Activated CD4-positive, alpha-beta memory T cell treated with anti-CD3 and anti-CD28 coated beads for 36 hours (primary cell): ENCODE measurements at regions of chr17 and their contacts with region 1.

Region 1: DNA sequence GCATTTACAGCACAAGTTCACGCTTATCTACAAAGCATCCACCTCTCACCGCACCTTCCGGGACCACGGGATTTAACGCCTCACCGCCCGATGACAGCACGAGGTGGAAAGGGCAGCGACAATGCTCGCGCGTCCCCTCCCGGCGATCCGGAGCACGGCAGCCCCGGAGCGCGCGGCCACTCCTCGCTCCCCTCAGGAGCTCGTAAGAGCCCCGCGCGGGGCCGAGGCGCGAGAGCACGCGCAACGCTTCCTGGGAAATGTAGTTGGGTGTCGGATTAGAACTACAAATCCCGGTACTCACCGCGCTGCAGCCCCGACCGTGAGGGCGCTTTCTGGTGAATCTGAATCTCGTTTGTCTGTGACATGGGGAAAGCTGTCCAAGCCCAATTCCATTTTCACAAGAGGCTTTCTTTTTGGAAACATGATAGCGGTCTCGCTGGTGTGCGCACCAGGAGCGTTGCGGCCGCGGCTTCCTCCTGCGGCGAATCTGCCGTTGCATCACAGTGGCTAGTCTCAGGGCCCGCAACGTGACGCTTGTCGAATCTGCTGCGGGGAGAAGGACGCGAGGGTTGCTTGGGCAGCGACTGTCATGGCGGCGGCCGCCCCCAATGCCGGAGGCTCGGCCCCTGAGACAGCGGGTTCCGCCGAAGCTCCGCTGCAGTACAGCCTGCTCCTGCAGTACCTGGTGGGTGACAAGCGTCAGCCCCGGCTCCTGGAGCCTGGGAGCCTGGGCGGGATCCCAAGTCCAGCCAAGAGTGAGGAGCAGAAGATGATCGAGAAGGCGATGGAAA is at the start of gene TIMM22:
- DNase-seq: peak; percentile 96
- H3K4me3 Mint-ChIP-seq: peak within 1 kb of the TSS; percentile 92
- H3K27ac Mint-ChIP-seq: peak within 1 kb of the TSS; percentile 97
- H3K4me1 Mint-ChIP-seq: peaks cover 22% of the 10 kb centered on the region
- H3K27me3 Mint-ChIP-seq: no peaks in the 10 kb centered on the region
- total RNA-seq, gene TIMM22: 8.0 to 9.6 TPM

Region 2: DNA sequence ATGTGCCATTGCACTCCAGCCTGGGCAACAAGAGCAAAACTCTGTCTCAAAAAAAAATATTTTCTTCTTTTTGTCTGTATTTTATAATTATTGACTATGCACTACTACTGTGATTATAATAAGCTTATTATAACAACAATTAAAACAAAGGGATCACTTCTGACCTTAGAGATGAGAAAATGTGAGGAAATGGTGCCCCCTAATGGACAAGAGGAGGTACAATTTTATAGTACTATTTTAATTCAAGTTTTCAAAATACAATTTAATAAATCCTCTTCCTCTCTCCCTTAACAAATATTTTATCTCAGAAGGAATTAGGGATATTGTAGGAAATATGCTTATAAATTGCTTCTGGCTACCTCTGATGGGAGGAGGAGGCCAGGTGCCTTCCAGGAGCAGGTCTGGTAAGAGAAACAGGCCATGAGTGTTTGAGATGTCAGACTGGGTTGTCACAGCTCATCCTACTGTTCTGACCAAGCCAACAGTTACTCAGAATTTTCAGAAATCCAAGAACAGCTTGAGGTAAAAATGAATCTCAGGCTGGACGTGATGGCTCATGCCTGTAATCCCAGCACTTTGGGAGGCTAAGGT is 296.1 kb before region 1 on chr17:
- CTCF ChIA-PET with region 1: interaction called, 8 read pairs
- POLR2A ChIA-PET with region 1: no interaction called
- intact Hi-C with region 1: loop called (anchors 5 kb)
- DNase-seq: no peak
- H3K4me3 Mint-ChIP-seq: no peak overlapping the region
- H3K27ac Mint-ChIP-seq: no peak overlapping the region
- H3K4me1 Mint-ChIP-seq: peaks cover 4% of the 10 kb centered on the region
- H3K27me3 Mint-ChIP-seq: no peaks in the 10 kb centered on the region

Region 3: DNA sequence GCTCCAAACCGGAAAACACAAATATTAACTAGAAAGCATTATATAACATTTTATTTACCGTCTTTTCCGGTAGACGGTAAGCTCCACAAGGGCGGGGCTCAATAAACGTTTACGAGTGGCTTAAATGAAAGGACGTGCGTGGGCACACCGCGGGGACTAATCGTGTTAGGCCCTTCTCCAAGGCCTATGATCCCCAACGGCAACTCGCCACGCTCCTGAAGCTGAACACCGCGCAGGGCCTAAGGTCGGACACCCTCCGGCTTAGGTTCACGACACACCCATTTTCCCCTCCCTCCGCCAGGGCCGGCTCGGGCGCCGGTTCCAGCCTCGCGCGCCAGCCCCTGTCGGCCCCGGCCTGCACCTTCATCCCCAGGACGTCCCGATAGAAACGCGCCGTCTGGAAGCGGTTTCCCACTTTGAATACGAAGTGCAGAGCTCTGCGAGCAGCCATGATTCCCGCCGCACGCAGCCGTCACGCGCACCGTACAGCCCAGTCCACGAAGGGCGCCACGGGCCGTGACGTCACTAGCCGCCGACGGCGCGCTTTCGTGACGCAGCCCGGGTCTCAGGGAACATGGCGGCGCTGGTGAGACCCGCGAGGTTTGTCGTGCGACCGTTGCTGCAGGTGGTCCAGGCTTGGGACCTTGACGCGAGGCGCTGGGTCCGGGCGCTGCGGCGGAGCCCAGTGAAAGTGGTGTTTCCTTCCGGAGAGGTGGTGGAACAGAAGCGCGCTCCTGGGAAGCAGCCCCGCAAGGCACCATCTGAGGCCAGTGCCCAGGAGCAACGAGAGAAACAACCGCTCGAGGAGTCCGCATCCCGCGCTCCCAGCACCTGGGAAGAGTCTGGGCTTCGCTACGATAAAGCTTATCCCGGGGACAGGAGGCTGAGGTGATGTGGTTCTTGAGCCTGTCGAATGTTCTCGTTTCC is 214.7 kb before region 1 on chr17 and contains the starts of genes GLOD4 and MRM3:
- CTCF ChIA-PET with region 1: interaction called, 17 read pairs
- POLR2A ChIA-PET with region 1: interaction called, 8 read pairs
- intact Hi-C with region 1: loop called (anchors 1 kb)
- DNase-seq: peak; percentile 95
- H3K4me3 Mint-ChIP-seq: peak within 1 kb of the TSS; percentile 97
- H3K27ac Mint-ChIP-seq: peak within 1 kb of the TSS; percentile 93
- H3K4me1 Mint-ChIP-seq: peaks cover 37% of the 10 kb centered on the region
- H3K27me3 Mint-ChIP-seq: no peaks in the 10 kb centered on the region
- total RNA-seq, gene GLOD4: 56.3 to 66.5 TPM
- total RNA-seq, gene MRM3: 24.6 to 26.1 TPM

Region 4: GRCh38 chr17:879549-880442 is 117.0 kb before region 1 on chr17:
- CTCF ChIA-PET with region 1: interaction called, 10 read pairs
- POLR2A ChIA-PET with region 1: no interaction called
- intact Hi-C with region 1: loop called (anchors 5 kb)
- DNase-seq: peak; percentile 81
- H3K4me3 Mint-ChIP-seq: no peak overlapping the region
- H3K27ac Mint-ChIP-seq: no peak overlapping the region
- H3K4me1 Mint-ChIP-seq: peaks cover 10% of the 10 kb centered on the region
- H3K27me3 Mint-ChIP-seq: peaks cover 29% of the 10 kb centered on the region

Region 5: GRCh38 chr17:1019451-1019850 is 22.7 kb after region 1 on chr17:
- CTCF ChIA-PET with region 1: no interaction called
- POLR2A ChIA-PET with region 1: no interaction called
- intact Hi-C with region 1: no loop called
- DNase-seq: no peak
- H3K4me3 Mint-ChIP-seq: no peak overlapping the region
- H3K27ac Mint-ChIP-seq: no peak overlapping the region
- H3K4me1 Mint-ChIP-seq: no peaks in the 10 kb centered on the region
- H3K27me3 Mint-ChIP-seq: no peaks in the 10 kb centered on the region

Region 6: DNA sequence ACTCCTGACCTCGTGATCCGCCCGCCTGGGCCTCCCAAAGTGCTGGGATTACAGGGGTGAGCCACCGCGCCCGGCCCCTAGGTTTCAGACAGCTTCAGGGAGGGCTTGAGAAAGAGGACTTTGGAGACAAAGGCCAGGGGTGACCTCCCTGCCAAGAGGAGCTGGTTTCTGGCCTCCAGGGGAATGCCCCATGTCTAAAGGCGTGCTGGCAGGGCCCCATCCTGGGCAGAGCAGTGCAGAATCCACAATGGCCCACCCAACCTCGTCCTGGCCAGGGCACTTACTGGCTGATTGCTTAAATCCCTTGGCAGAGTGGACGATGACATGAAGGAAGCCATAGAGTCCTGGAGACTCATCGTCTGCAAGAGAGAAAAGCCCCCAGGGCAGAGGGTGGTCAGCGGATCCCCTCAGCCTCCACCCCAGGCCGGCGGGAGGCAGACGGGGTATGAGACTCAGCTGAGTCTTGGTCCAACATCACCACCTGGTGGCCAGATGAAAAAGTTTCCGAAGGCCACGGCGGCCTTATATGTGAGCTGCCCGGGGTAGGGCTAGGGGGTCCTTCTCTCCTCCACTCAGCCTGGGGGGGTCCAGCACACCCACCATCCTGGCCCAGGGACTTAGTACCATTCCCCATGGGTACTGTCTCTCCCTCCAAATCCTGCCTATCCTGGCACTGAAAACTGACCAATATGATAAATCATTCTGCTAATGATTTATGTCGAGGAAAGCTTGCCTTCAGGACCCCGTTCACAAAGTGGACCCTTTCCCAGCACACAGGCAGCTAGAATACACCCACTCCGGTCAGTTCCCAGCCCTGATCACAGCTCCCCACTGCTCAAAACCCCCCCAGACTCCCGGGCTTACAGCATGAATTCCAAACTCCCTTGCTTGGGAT is 59.2 kb after region 1 on chr17:
- CTCF ChIA-PET with region 1: interaction called, 14 read pairs
- POLR2A ChIA-PET with region 1: no interaction called
- intact Hi-C with region 1: no loop called
- DNase-seq: peak; percentile 53
- H3K4me3 Mint-ChIP-seq: no peak overlapping the region
- H3K27ac Mint-ChIP-seq: no peak overlapping the region
- H3K4me1 Mint-ChIP-seq: peaks cover 2% of the 10 kb centered on the region
- H3K27me3 Mint-ChIP-seq: no peaks in the 10 kb centered on the region

Region 7: DNA sequence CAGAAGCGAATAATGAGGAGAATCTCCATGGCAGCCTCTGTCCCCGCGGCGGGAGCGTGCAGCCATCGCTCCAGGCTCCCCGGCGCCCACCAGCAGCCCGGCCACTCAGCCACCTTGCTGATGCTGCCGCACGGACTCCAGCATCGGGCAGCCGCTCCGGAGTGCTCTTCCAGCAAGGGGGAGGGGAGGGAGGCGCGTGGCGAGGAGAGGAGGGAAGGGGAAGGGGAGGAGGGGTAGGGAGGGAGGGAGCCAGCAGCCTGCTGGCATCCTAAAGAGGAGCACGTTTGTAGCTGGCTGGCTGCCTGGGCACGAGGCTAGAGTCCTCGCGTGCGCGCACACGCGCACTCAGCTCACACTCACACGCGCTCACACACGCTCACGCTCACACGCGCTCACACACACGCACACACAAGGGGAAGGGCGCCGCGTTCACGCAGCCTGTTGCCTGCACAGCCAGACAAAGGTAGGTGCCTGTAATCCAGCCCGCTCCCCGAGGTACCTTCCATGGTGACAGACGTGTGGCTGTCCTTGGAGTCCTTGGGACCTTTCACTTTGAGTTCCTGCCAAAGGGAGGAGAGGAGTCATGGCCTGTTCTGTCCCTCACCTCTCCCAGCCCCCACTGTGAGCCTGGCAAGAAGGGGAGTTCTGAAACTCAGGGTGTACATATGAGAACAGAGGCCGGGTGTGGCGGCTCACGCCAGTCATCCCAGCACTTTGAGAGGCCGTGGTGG is 82.2 kb after region 1 on chr17:
- CTCF ChIA-PET with region 1: no interaction called
- POLR2A ChIA-PET with region 1: no interaction called
- intact Hi-C with region 1: no loop called
- DNase-seq: no peak
- H3K4me3 Mint-ChIP-seq: no peak overlapping the region
- H3K27ac Mint-ChIP-seq: no peak overlapping the region
- H3K4me1 Mint-ChIP-seq: peaks cover 4% of the 10 kb centered on the region
- H3K27me3 Mint-ChIP-seq: no peaks in the 10 kb centered on the region